ENCODE measurements at regions of chr15 and their contacts with region 1.

Region 1: GRCh38 chr15:68053701-68054627 is at the start of gene PIAS1:
- DNase-seq: peak; percentile 91
- H3K4me3 Mint-ChIP-seq: peak within 1 kb of the TSS; percentile 100
- H3K27ac Mint-ChIP-seq: peak within 1 kb of the TSS; percentile 93
- H3K4me1 Mint-ChIP-seq: peaks cover 25% of the 10 kb centered on the region
- H3K27me3 Mint-ChIP-seq: no peaks in the 10 kb centered on the region
- CTCF ChIP-seq: no peak
- total RNA-seq, gene PIAS1: 32.9 and 36.8 TPM in 2 replicates

Region 2: GRCh38 chr15:67542420-67543347 is 511.3 kb before region 1 on chr15 and contains the start of gene MAP2K5:
- CTCF ChIA-PET with region 1: no interaction called
- POLR2A ChIA-PET with region 1: no interaction called
- intact Hi-C with region 1: no loop called
- DNase-seq: peak; percentile 77
- H3K4me3 Mint-ChIP-seq: peak within 1 kb of the TSS; percentile 96
- H3K27ac Mint-ChIP-seq: peak within 1 kb of the TSS; percentile 89
- H3K4me1 Mint-ChIP-seq: peaks cover 15% of the 10 kb centered on the region
- H3K27me3 Mint-ChIP-seq: no peaks in the 10 kb centered on the region
- CTCF ChIP-seq: no peak
- total RNA-seq, gene MAP2K5: 24.4 and 29.0 TPM in 2 replicates

Region 3: DNA sequence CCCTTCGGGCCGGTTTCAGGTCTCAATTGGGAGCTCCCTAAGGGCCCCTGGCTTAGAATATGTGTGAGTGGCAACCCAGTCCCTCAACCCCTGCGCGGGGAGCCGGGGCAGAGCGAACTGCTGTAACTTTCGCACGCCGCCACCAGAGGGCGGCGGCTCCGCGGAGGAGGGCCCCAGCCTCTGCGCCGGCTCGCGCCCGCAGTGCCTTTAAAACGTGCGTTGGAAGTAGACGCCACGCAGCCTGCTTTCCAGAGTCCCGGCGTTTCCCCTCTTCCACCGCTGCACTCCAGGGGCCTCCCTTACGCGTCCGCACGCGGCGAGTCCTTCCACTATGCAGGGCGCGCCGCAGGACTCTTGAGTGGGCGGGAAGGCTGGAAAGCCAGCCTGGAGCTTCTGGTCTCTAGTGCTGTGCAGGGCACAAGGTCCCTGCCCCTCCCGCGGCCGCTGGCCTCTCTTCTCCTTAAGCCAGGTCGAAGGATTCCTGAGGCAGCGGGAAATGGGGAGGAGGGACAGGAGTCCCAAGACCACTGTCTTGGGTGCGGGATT is 190.4 kb before region 1 on chr15:
- CTCF ChIA-PET with region 1: interaction called, 6 read pairs
- POLR2A ChIA-PET with region 1: interaction called, 41 read pairs
- intact Hi-C with region 1: loop called (anchors 1 kb)
- DNase-seq: peak; percentile 78
- H3K4me3 Mint-ChIP-seq: peak overlapping the region; percentile 66
- H3K27ac Mint-ChIP-seq: peak overlapping the region; percentile 37
- H3K4me1 Mint-ChIP-seq: peaks cover 14% of the 10 kb centered on the region
- H3K27me3 Mint-ChIP-seq: no peaks in the 10 kb centered on the region
- CTCF ChIP-seq: peak; percentile 95

Region 4: GRCh38 chr15:67945951-67946700 is 107.8 kb before region 1 on chr15:
- CTCF ChIA-PET with region 1: no interaction called
- POLR2A ChIA-PET with region 1: interaction called, 26 read pairs
- intact Hi-C with region 1: no loop called
- DNase-seq: peak; percentile 87
- H3K4me3 Mint-ChIP-seq: peak overlapping the region; percentile 58
- H3K27ac Mint-ChIP-seq: peak overlapping the region; percentile 95
- H3K4me1 Mint-ChIP-seq: peaks cover 43% of the 10 kb centered on the region
- H3K27me3 Mint-ChIP-seq: no peaks in the 10 kb centered on the region
- CTCF ChIP-seq: no peak

Region 5: DNA sequence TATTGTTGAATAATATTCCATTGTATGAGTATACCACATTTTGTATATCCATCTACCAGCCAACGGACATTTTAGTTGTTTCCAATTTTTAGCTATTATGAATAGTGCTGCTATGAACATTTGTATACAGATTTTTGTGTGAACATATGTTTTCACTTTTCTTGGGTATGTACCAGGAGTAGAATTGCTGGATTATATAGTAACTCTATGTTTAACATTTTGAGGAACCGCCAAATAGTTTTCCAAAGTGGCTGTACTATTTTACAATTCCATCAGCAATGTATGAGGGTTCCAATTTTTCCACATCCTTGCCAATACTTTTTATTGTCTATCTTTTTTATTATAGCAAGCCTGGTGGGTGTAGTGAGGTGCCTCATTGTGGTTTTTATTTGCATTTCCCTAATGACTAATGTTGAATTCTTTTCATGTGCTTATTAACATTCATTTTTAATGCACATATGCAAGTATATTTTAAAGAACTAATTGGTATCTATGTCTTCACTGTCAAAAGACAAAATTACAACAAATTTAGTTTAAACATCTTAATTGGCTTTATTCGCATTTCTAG is 77.4 kb before region 1 on chr15:
- CTCF ChIA-PET with region 1: no interaction called
- POLR2A ChIA-PET with region 1: no interaction called
- intact Hi-C with region 1: no loop called
- DNase-seq: no peak
- H3K4me3 Mint-ChIP-seq: no peak overlapping the region
- H3K27ac Mint-ChIP-seq: no peak overlapping the region
- H3K4me1 Mint-ChIP-seq: no peaks in the 10 kb centered on the region
- H3K27me3 Mint-ChIP-seq: no peaks in the 10 kb centered on the region
- CTCF ChIP-seq: no peak

Region 6: GRCh38 chr15:67998599-67999122 is 55.3 kb before region 1 on chr15:
- CTCF ChIA-PET with region 1: interaction called, 5 read pairs
- POLR2A ChIA-PET with region 1: interaction called, 52 read pairs
- intact Hi-C with region 1: no loop called
- DNase-seq: peak; percentile 80
- H3K4me3 Mint-ChIP-seq: peak overlapping the region; percentile 53
- H3K27ac Mint-ChIP-seq: peak overlapping the region; percentile 50
- H3K4me1 Mint-ChIP-seq: peaks cover 30% of the 10 kb centered on the region
- H3K27me3 Mint-ChIP-seq: no peaks in the 10 kb centered on the region
- CTCF ChIP-seq: no peak

Region 7: GRCh38 chr15:68126396-68126795 is 72.4 kb after region 1 on chr15:
- CTCF ChIA-PET with region 1: interaction called, 3 read pairs
- POLR2A ChIA-PET with region 1: interaction called, 20 read pairs
- intact Hi-C with region 1: no loop called
- DNase-seq: peak; percentile 79
- H3K4me3 Mint-ChIP-seq: no peak overlapping the region
- H3K27ac Mint-ChIP-seq: no peak overlapping the region
- H3K4me1 Mint-ChIP-seq: peaks cover 26% of the 10 kb centered on the region
- H3K27me3 Mint-ChIP-seq: no peaks in the 10 kb centered on the region
- CTCF ChIP-seq: no peak